ENCODE measurements at regions of chr5 and their contacts with region 1.

Region 1: GRCh38 chr5:144385597-144385996 is 214.9 kb downstream of the KCTD16 start:
- DNase-seq: no peak
- ATAC-seq: no peak

Region 2: GRCh38 chr5:143968011-143968878 is 417.4 kb before region 1 on chr5:
- intact Hi-C with region 1: no loop called
- DNase-seq: no peak
- ATAC-seq: peak; percentile 38

Region 3: DNA sequence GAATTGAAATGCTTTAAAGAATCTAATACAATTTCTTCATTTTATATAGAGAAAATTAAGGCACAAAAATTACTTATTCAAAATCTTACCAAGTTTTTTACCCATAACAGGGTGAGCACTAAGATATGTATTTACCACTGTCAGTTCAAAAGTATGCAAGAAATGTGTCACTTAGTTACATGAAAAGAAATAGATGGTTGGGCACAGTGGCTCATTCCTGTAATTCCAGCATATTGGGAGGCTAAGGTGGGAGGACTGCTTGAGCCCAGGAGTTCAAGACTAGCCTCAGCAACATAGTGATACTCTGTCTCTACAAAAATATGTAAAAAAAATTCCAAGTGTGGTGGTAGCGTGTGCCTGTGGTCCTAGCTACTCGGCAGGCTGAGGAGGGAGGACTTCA is 234.6 kb before region 1 on chr5:
- intact Hi-C with region 1: no loop called
- DNase-seq: no peak
- ATAC-seq: no peak

Region 4: DNA sequence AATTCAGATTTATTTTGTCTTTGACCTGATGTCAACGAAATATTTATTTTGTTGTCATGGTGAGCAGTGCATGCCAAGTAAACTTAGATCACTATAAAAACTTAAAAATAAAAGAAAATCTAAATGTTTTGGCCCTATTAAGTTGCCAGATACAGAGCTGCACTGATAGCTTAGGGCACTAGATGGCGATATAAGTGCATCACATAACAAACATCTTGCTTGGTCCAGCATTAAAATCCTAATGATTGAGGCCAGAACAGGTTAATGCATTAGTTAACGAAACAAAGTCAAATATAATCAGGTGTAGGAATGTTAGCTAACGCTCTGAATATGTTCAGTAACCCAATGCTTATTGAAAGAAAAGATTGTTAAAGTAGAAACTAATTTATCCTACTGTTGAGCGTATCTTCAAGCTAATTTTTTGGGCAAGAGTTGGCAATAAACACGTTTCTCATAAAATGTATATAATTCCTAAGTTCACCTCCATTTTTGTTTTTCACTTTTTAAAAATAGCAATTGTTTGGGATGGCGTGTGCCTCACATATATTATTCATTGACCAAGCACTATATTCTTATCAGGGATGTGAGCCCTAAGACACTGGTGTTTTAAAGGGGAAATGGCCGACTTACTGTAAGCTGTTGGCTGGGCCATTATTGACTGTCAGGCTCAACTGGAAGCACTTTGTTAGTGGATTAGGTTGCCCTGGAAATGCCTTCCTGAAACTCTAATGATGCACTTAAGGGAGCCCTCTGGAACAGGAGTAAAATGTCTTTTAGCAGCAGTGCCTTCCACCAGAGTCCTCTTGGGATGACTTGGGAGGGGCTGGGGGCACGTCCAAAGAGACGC is 181.6 kb before region 1 on chr5:
- intact Hi-C with region 1: loop called (anchors 10 kb)
- DNase-seq: no peak
- ATAC-seq: peak; percentile 70

Measured in Right ventricle myocardium superior (tissue), 1 donor.